ENCODE measurements at regions of chr13 and their contacts with region 1.

Region 1: DNA sequence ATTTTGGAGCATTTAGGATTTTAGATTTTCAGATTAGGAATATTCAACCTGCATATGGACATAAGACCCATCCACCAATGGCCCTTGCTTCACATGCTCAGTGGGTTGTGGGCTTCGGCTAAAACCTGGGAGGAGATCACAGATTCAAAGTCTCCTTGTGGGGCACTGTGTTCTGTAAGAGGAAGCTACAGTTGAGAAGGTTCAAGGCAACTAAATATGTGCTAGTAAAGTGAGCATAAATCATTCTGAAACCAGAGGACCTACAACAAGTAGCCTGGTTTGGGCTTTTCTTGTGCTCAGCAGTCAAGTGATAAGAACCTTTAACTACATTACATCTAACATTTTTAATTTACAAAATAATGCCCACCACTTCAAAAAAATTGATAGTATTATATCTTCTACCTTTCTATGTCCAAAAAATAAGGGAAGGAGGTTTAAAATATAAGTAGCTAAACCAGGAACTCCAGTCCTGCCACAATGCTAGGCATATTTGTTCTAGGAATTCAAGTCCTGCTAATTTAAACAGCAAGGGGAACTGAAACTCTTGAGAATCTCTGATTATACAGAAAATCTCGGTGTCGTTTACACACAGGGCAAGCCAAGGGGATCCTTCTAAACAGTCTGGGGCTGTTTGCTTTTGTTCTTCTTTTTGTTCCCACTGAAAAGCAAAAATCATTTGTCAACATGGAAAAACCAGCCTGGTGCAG is 36.6 kb downstream of the FOXO1 start:
- H3K4me3 Mint-ChIP-seq: peak overlapping the region; percentile 32
- H3K27ac Mint-ChIP-seq: peak overlapping the region; percentile 87
- H3K4me1 Mint-ChIP-seq: peaks cover 63% of the 10 kb centered on the region
- H3K27me3 Mint-ChIP-seq: no peaks in the 10 kb centered on the region

Region 2: GRCh38 chr13:40589285-40590109 is 40.3 kb before region 1 on chr13:
- intact Hi-C with region 1: loop called (anchors 5 kb)
- H3K4me3 Mint-ChIP-seq: peak overlapping the region; percentile 20
- H3K27ac Mint-ChIP-seq: peak overlapping the region; percentile 35
- H3K4me1 Mint-ChIP-seq: peaks cover 81% of the 10 kb centered on the region
- H3K27me3 Mint-ChIP-seq: no peaks in the 10 kb centered on the region

Measured in dendritic cell treated with granulocyte-macrophage colony-stimulating factor and Interleukin-4, amounts not matched to agents 40 ng/mL and 50 ng/mL, for 4 days (primary cell).